Activated T-helper 1 cell treated with anti-CD3 and anti-CD28 coated beads, Interleukin-12 subunit alpha, Interleukin-12 subunit beta, Interleukin-2, Interleukin-4 antibody, amounts not matched to agents 30 ng/mL and 10 ng/mL and 1 ng/mL, durations not matched to agents 14 hours and 24 hours and 36 hours (primary cell): ENCODE measurements at regions of chr20 and their contacts with region 1.

Region 1: GRCh38 chr20:34111702-34112599 is at the start of gene EIF2S2:
- DNase-seq: peak; percentile 96
- H3K4me3 Mint-ChIP-seq: peak within 1 kb of the TSS; percentile 88
- H3K27ac Mint-ChIP-seq: peak within 1 kb of the TSS; percentile 98
- H3K4me1 Mint-ChIP-seq: peaks cover 46% of the 10 kb centered on the region
- H3K27me3 Mint-ChIP-seq: peaks cover 1% of the 10 kb centered on the region
- total RNA-seq, gene EIF2S2: 99.8 and 105 TPM in 2 replicates

Region 2: GRCh38 chr20:34058831-34059230 is 53.1 kb before region 1 on chr20:
- intact Hi-C with region 1: no loop called
- DNase-seq: no peak
- H3K4me3 Mint-ChIP-seq: no peak overlapping the region
- H3K27ac Mint-ChIP-seq: peak overlapping the region; percentile 8
- H3K4me1 Mint-ChIP-seq: peaks cover 47% of the 10 kb centered on the region
- H3K27me3 Mint-ChIP-seq: no peaks in the 10 kb centered on the region

Region 3: DNA sequence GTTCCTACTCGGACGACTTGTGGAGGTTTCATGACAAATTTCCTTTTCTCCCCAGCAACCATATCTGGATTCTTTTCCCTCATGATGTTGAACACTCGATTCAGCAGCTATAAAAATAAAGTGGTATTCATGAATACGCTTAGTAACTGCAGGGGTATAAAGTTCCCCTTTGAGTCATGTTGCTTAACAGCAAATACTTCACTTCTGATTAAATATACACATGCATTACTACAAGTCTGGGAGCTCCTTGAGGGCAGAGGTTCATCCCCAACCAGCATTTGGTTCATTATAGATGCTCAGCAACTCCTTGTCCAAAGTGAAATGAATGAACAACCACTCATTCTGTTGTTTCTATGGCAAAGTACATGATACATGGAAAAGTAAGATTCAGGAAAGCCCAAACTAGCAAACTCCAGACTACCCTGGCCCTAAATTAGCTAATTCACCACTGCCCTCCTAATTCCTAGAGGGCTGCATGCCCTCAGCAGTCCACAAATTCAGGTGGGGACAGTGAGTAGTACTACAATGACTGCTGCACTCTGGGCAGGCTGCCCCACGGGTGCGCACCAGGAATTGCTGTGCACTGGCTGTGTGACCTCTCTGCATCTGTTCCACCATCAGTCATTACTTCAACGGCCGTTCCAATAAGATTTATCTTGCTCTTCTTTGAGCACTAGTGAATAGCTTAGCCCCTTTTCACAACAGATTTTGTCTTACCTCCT is 15.1 kb before region 1 on chr20:
- intact Hi-C with region 1: loop called (anchors 1 kb)
- DNase-seq: no peak
- H3K4me3 Mint-ChIP-seq: no peak overlapping the region
- H3K27ac Mint-ChIP-seq: peak overlapping the region; percentile 9
- H3K4me1 Mint-ChIP-seq: peaks cover 9% of the 10 kb centered on the region
- H3K27me3 Mint-ChIP-seq: no peaks in the 10 kb centered on the region